ENCODE measurements at regions of chr1 and their contacts with region 1.

Region 1: GRCh38 chr1:197180252-197180878 is 33.9 kb upstream of the ASPM start:
- DNase-seq: no peak
- H3K4me3 Mint-ChIP-seq: no peak overlapping the region
- H3K27ac Mint-ChIP-seq: no peak overlapping the region
- H3K4me1 Mint-ChIP-seq: peaks cover 3% of the 10 kb centered on the region
- H3K27me3 Mint-ChIP-seq: no peaks in the 10 kb centered on the region

Region 2: GRCh38 chr1:197130677-197131304 is 49.6 kb before region 1 on chr1:
- CTCF ChIA-PET with region 1: no interaction called
- POLR2A ChIA-PET with region 1: no interaction called
- intact Hi-C with region 1: no loop called
- DNase-seq: no peak
- H3K4me3 Mint-ChIP-seq: no peak overlapping the region
- H3K27ac Mint-ChIP-seq: no peak overlapping the region
- H3K4me1 Mint-ChIP-seq: peaks cover 5% of the 10 kb centered on the region
- H3K27me3 Mint-ChIP-seq: no peaks in the 10 kb centered on the region

Region 3: GRCh38 chr1:197195100-197195499 is 14.7 kb after region 1 on chr1:
- CTCF ChIA-PET with region 1: interaction called, 11 read pairs
- POLR2A ChIA-PET with region 1: no interaction called
- intact Hi-C with region 1: no loop called
- DNase-seq: no peak
- H3K4me3 Mint-ChIP-seq: no peak overlapping the region
- H3K27ac Mint-ChIP-seq: no peak overlapping the region
- H3K4me1 Mint-ChIP-seq: peaks cover 53% of the 10 kb centered on the region
- H3K27me3 Mint-ChIP-seq: no peaks in the 10 kb centered on the region

Region 4: GRCh38 chr1:197339106-197340060 is 159.0 kb after region 1 on chr1:
- CTCF ChIA-PET with region 1: interaction called, 12 read pairs
- POLR2A ChIA-PET with region 1: no interaction called
- intact Hi-C with region 1: loop called (anchors 1 kb)
- DNase-seq: no peak
- H3K4me3 Mint-ChIP-seq: no peak overlapping the region
- H3K27ac Mint-ChIP-seq: no peak overlapping the region
- H3K4me1 Mint-ChIP-seq: peaks cover 3% of the 10 kb centered on the region
- H3K27me3 Mint-ChIP-seq: peaks cover 2% of the 10 kb centered on the region

Region 5: DNA sequence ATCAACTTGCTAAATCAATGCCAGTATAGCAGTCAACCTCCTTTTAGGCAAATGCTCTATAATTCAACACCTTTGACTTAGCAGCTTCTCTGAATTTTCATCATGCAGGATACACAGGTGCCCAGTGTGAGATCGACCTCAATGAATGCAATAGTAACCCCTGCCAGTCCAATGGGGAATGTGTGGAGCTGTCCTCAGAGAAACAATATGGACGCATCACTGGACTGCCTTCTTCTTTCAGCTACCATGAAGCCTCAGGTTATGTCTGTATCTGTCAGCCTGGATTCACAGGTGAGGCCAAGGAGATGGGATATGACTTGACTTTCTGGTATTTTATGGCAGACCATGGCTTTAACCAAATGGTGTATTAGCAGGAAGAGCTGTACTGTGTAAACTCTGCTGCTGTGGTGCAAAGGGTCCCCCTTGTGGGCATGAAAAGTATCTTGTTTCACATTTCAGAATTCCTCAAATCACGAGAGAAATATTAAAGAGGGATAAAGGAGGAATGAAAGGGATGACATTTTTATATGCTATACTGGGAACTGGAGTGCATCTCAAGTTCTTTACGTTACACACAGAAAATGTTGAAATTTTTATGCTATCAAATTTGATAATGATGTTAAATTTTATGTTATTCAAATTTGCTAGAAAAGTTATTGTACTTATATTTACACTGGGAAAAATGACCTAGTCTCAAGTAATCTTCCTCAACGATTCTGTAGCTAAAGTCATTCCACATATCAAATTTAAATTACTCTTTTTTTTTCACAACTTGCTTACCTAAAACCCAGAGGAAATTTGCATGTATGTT is 176.6 kb after region 1 on chr1:
- CTCF ChIA-PET with region 1: interaction called, 85 read pairs
- POLR2A ChIA-PET with region 1: no interaction called
- intact Hi-C with region 1: loop called (anchors 1 kb)
- DNase-seq: peak; percentile 25
- H3K4me3 Mint-ChIP-seq: no peak overlapping the region
- H3K27ac Mint-ChIP-seq: no peak overlapping the region
- H3K4me1 Mint-ChIP-seq: no peaks in the 10 kb centered on the region
- H3K27me3 Mint-ChIP-seq: no peaks in the 10 kb centered on the region

Measured in activated CD4-positive, alpha-beta memory T cell treated with anti-CD3 and anti-CD28 coated beads for 36 hours (primary cell).